Mucosa of descending colon (tissue), 3 donors: ENCODE measurements at regions of chr15 and their contacts with region 1.

Region 1: DNA sequence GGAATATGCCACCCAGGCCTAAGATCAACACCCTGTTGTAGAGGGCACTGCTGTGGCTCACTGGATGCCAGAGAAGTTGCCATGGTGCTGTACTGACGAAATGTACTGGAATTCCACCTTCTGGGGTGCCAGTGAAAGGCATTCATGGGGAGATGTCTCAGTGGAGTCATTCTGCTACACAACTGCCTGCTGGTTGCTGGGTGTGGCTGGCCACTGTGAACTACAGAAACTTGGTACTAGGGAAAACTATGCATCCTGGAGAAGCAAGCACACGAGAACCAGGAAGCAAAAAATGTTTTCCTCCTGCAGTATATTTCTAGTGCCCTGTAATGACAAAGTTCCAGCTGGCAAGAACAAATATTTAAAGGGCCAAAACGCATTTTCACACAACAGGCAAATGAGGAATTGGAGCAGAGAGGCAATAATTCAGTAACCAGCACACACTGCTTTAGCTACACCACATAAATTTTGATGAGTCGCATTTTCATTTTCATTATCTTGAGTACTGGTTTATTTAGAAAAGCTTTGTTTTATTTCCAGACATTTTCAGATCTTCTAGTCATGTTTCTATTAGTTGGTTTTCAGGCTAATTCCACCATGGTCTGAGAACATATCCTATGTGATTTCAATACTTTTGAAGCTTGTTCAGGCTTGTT is 18.3 kb upstream of the RFX7 start:
- DNase-seq: peak; percentile 59 to 75 (median 63)
- ATAC-seq: peak; percentile 100
- H3K4me3 ChIP-seq: no peak overlapping the region
- H3K4me1 ChIP-seq: no peaks in the 10 kb centered on the region
- CTCF ChIP-seq: no peak

Region 2: GRCh38 chr15:56365075-56365711 is 103.2 kb after region 1 on chr15 and contains the start of gene TEX9:
- intact Hi-C with region 1: loop called in 1 of 2 experiments (anchors 5 kb)
- DNase-seq: peak; percentile 92 to 93 (median 93)
- ATAC-seq: peak; percentile 100
- H3K4me3 ChIP-seq: peak within 1 kb of the TSS; percentile 18
- H3K4me1 ChIP-seq: peaks cover 10% of the 10 kb centered on the region
- CTCF ChIP-seq: no peak
- total RNA-seq, gene TEX9: 5.7 to 10.6 (median 7.8) TPM